Activated CD4-positive, alpha-beta memory T cell treated with anti-CD3 and anti-CD28 coated beads for 36 hours (primary cell): ENCODE measurements at regions of chr20 and their contacts with region 1.

Region 1: DNA sequence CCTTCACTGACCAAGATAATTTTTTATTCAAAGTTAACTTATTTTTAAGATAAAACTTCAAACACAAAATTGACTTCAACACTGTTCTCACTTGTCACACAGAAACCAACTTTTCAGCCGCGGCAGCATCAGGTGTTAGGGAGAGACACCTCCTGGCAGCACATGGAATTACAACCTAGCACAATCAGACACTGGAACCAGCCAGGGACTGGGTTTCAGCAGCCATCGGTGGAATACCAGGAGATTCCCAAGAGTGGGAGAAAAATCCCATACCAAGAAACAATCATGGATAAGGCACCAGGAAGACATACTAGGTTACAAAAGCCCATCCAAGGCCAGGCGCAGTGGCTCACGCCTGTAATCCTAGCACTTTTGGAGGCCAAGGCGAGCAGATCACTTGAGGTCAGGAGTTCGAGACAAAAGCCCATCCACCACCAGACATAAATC is 70.0 kb downstream of the SNX5 start:
- DNase-seq: peak; percentile 73
- H3K4me3 Mint-ChIP-seq: no peak overlapping the region
- H3K27ac Mint-ChIP-seq: no peak overlapping the region
- H3K4me1 Mint-ChIP-seq: peaks cover 16% of the 10 kb centered on the region
- H3K27me3 Mint-ChIP-seq: peaks cover 23% of the 10 kb centered on the region

Region 2: DNA sequence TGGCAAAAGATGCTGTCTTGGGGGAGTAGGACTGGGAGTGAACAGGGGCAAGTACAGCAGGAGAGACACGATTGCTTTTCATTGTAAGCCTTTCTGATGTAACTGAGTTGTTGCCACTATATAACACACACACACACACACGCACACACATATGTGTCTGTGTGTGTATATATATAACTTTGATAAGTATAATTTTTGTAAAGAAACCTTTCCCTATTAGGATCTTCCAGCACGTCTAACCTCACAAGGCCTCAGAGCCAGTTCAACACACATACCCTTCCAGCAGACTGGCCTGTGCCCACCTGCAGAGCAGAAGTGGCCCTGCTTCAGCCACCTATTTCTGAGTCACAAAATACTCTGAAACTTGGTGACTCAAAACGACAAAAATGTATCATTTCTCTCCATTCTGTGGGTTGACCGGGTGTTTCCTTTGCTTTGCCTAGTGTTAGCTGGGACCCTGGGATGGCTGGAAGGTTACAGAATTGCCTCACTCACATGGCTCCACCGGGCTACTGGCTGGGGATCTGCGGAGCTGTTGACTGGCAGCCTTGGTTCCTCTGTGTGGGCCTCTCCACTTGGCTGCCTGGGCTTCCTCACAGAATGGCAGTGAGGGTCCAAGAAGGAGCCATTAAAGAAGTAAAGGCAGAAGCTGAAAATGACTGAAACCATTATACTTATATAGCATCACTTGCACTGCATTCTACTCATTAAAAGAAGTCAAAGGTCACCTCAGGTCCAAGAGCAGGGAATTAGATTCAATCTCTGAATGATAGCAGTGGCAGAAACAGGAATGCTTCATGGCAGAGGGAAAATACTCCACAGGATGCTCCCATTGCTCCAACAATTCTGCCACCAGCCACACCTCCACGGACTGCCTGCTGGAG is 72.4 kb before region 1 on chr20:
- CTCF ChIA-PET with region 1: interaction called, 3 read pairs
- POLR2A ChIA-PET with region 1: no interaction called
- intact Hi-C with region 1: loop called (anchors 10 kb)
- DNase-seq: peak; percentile 64
- H3K4me3 Mint-ChIP-seq: no peak overlapping the region
- H3K27ac Mint-ChIP-seq: no peak overlapping the region
- H3K4me1 Mint-ChIP-seq: peaks cover 12% of the 10 kb centered on the region
- H3K27me3 Mint-ChIP-seq: no peaks in the 10 kb centered on the region